MCF 10A (cell line): ENCODE measurements at regions of chrX and their contacts with region 1.

Region 1: GRCh38 chrX:45070116-45071007 is 130.3 kb downstream of the DIPK2B start:
- DNase-seq: peak; percentile 68
- H3K4me3 Mint-ChIP-seq: no peak overlapping the region
- H3K27ac Mint-ChIP-seq: no peak overlapping the region
- H3K4me1 Mint-ChIP-seq: peaks cover 14% of the 10 kb centered on the region
- H3K27me3 Mint-ChIP-seq: no peaks in the 10 kb centered on the region
- CTCF ChIP-seq: peak; percentile 64

Region 2: DNA sequence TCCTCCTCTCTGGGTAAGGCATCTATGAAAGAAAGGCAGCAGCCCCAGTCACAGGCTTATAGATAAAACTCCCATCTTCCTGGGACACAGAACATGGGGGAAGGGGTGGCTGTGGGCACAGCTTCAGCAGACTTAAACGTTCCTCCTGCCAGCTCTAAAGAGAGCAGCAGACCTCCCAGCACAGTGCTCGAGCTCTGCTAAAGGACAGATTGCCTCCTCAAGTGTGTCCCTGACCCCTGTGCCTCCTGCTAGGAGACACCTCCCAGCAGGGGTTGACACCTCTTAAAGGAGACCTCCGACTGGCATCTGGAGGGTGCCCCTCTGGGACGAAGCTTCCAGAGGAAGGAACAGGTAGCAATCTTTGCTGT is 816.8 kb before region 1 on chrX:
- CTCF ChIA-PET with region 1: no interaction called
- POLR2A ChIA-PET with region 1: no interaction called
- intact Hi-C with region 1: loop called (anchors 5 kb)
- DNase-seq: no peak
- H3K4me3 Mint-ChIP-seq: no peak overlapping the region
- H3K27ac Mint-ChIP-seq: no peak overlapping the region
- H3K4me1 Mint-ChIP-seq: no peaks in the 10 kb centered on the region
- H3K27me3 Mint-ChIP-seq: peaks cover 43% of the 10 kb centered on the region
- CTCF ChIP-seq: no peak

Region 3: DNA sequence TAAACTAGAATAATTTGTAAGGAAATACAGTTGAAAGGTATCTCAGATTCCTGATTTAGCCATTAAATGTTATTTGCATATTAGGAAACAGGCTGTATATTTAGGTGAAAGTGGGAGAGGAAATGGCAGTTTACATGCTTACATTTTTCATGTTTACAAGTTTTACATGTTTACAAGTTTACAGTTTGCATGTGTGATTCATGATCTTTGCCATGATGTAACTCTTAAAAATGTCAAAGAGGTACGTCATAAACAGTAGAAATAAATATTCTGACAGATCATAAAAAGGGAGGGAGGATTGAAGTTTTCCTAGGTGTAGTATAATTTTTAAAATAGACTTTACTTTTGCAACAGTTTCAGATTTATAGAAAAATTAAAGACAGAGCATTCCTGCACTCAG is 151.6 kb before region 1 on chrX:
- CTCF ChIA-PET with region 1: interaction called, 5 read pairs
- POLR2A ChIA-PET with region 1: no interaction called
- intact Hi-C with region 1: loop called (anchors 2 kb)
- DNase-seq: no peak
- H3K4me3 Mint-ChIP-seq: no peak overlapping the region
- H3K27ac Mint-ChIP-seq: no peak overlapping the region
- H3K4me1 Mint-ChIP-seq: peaks cover 20% of the 10 kb centered on the region
- H3K27me3 Mint-ChIP-seq: no peaks in the 10 kb centered on the region
- CTCF ChIP-seq: no peak

Region 4: GRCh38 chrX:45186643-45187026 is 116.3 kb after region 1 on chrX:
- CTCF ChIA-PET with region 1: interaction called, 5 read pairs
- POLR2A ChIA-PET with region 1: no interaction called
- intact Hi-C with region 1: loop called (anchors 5 kb)
- DNase-seq: no peak
- H3K4me3 Mint-ChIP-seq: peak overlapping the region; percentile 72
- H3K27ac Mint-ChIP-seq: no peak overlapping the region
- H3K4me1 Mint-ChIP-seq: peaks cover 6% of the 10 kb centered on the region
- H3K27me3 Mint-ChIP-seq: peaks cover 65% of the 10 kb centered on the region
- CTCF ChIP-seq: no peak